ENCODE measurements at regions of chr16 and their contacts with region 1.

Region 1: DNA sequence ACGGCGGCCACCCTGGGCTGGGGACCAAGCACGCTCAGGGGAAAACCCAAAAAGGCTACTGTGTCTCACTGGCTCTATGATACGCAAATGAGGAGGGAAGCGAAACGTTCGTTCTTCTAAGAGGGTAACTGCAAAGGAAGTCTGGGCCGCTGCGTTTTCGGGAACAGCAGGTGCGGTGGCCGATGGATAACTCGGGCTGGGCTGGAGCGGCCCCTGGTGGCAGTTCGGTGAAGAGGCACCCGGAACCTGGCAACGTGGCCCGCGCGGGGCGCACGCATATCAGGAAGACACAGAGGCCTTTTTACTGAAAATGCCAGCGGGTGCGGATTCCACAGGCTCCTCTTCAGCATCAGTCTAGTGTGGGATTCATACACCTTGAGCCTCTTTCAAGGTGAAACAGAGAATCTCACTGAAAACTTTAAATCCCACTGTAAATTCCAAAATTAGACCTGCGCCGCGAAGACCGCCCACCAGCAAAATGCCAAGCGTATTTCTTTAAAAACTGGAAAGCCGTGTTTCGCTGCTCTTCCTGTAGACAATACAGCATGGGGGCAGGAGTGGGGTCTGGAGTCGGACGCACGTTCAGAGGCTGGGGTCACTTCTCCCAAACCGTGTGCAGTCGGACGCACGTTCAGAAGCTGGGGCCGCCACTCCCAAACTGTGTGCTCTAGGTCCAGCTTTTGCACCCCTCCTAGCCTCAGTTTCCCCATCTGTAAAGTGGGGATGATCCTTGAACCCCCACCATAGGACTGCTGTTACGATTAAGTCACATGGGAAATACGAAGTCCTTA is 44.4 kb upstream of the METTL9 start:
- DNase-seq: peak; percentile 86 to 94
- H3K4me3 ChIP-seq: peak overlapping the region; percentile 6; the same call in 1 of the 2 replicates
- H3K4me3 Mint-ChIP-seq: peak overlapping the region; percentile 27
- H3K27ac Mint-ChIP-seq: peak overlapping the region; percentile 6
- H3K4me1 ChIP-seq: no peaks in the 10 kb centered on the region
- H3K4me1 Mint-ChIP-seq: no peaks in the 10 kb centered on the region
- H3K27me3 ChIP-seq: no peaks in the 10 kb centered on the region
- H3K27me3 Mint-ChIP-seq: no peaks in the 10 kb centered on the region
- CTCF ChIP-seq: peak; percentile 95 to 99

Region 2: DNA sequence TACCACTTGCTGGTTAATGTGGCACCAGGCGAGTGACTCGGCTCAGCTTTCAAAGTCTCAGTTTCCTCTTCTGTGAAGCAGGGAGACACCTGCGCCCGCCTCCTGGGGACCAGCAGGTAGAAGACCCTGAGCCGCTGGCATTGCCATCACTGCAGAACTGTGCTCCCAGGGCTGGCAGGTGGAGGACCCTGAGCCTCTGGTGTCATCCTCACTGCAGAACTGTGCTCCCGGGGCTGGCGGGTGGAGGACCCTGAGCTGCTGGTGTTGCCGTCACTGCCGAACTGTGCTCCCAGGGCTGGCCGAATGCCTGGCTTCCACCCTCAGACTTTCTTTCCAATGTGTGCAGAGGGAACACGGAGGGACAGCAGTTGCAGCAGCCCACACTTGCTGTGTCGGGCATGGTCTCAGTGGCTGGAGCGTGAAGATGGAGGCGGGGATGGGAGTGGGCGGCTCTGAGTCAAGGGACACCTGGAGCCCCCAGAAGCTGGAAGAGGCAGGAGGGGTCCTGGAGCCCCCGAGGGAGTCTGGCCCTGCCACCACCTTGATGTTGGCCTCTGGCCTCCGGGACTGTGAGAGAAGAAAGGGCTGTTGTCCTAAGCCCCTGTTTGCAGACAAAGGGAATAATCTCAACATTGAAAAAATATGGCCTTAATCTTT is 31.5 kb before region 1 on chr16:
- CTCF ChIA-PET with region 1: no interaction called
- POLR2A ChIA-PET with region 1: no interaction called
- intact Hi-C with region 1: loop called (anchors 2 kb)
- DNase-seq: no peak
- H3K4me3 ChIP-seq: no peak overlapping the region
- H3K4me3 Mint-ChIP-seq: no peak overlapping the region
- H3K27ac Mint-ChIP-seq: no peak overlapping the region
- H3K4me1 ChIP-seq: peaks cover 37% of the 10 kb centered on the region
- H3K4me1 Mint-ChIP-seq: no peaks in the 10 kb centered on the region
- H3K27me3 ChIP-seq: no peaks in the 10 kb centered on the region
- H3K27me3 Mint-ChIP-seq: no peaks in the 10 kb centered on the region
- CTCF ChIP-seq: no peak

Measured in Caco-2 (cell line).